Transverse colon (tissue), 4 donors: ENCODE measurements at regions of chr3 and their contacts with region 1.

Region 1: DNA sequence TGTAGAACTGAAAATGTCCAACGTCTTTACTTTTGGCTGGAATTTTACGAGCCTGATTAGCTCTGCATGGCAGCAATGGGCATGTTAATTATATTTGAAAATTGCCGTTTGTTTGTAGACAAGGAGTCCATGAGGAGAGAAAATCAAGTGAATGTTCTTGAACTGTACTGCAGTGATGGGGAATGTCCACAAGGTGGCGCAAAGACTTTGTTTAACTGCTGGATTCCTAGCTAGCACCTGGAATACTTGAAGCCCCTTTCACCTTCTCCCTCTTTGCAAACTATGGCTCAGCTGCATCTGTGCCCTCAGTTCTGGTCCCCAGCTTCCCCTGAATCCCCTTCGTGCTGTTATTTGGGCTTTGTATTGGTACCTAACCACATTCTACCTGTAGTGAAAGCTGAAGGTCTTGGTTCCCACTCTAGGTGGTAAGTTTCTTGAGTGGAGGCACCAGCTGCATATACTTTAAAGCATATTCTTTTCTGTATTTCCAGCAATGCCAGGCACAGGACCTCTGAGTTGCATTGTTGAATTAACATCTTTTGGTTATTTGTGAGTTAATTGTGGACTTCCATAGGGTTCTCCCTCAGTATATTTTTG is 25.3 kb downstream of the EXOG start:
- DNase-seq: peak; percentile 68
- H3K4me3 ChIP-seq: no peak overlapping the region
- H3K27ac ChIP-seq: no peak overlapping the region
- H3K4me1 ChIP-seq: peaks cover 0 to 3% (median 0%) of the 10 kb centered on the region in 4 donors
- H3K27me3 ChIP-seq: no peaks in the 10 kb centered on the region
- CTCF ChIP-seq: peak; percentile 86 to 92 (median 88)
- EP300 ChIP-seq: no peak
- POLR2A ChIP-seq: no peak

Region 2: GRCh38 chr3:38465588-38466154 is 55.8 kb before region 1 on chr3:
- in situ Hi-C with region 1: no loop called
- intact Hi-C with region 1: loop called (anchors 2 kb)
- DNase-seq: no peak
- H3K4me3 ChIP-seq: no peak overlapping the region
- H3K27ac ChIP-seq: no peak overlapping the region
- H3K4me1 ChIP-seq: peaks cover 0 to 27% (median 8%) of the 10 kb centered on the region in 4 donors
- H3K27me3 ChIP-seq: no peaks in the 10 kb centered on the region
- CTCF ChIP-seq: no peak
- EP300 ChIP-seq: no peak
- POLR2A ChIP-seq: no peak

Region 3: GRCh38 chr3:38651154-38651789 is 129.8 kb after region 1 on chr3:
- in situ Hi-C with region 1: loop called (anchors 5 to 10 kb)
- intact Hi-C with region 1: loop called (anchors 5 kb)
- DNase-seq: peak; percentile 74
- H3K4me3 ChIP-seq: no peak overlapping the region
- H3K27ac ChIP-seq: no peak overlapping the region
- H3K4me1 ChIP-seq: peaks cover 4 to 17% (median 11%) of the 10 kb centered on the region in 4 donors
- H3K27me3 ChIP-seq: peaks cover 44% of the 10 kb centered on the region
- CTCF ChIP-seq: peak; percentile 84 to 99 (median 96)
- EP300 ChIP-seq: no peak
- POLR2A ChIP-seq: no peak

Region 4: DNA sequence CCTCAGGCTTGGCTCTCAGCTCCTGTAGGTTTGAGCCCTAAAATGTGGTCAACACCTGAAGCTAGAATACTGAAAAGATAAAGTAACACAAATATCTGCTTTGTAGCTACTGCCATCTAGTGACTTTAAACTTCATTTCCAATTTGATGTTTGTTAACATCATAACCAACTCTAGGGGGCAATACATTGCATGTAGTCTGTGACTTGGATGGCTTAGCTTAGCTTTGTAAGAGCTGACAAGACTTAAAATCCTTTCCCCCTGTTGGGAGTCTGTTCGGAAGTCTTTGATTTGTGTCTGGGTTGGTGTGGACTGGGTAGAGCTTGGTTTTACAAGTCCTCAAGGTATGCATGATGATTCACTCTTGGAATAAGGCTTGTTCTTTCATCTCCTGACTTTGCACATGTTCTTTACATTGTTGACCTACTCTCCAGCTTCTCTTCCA is 478.5 kb after region 1 on chr3:
- in situ Hi-C with region 1: loop called in 3 of 4 experiments (anchors 25 kb)
- intact Hi-C with region 1: no loop called
- DNase-seq: no peak
- H3K4me3 ChIP-seq: no peak overlapping the region
- H3K27ac ChIP-seq: no peak overlapping the region
- H3K4me1 ChIP-seq: no peaks in the 10 kb centered on the region
- H3K27me3 ChIP-seq: no peaks in the 10 kb centered on the region
- CTCF ChIP-seq: peak in 4 of 5 experiments; percentile 33 to 52 (median 46)
- EP300 ChIP-seq: no peak
- POLR2A ChIP-seq: no peak